ENCODE measurements at regions of chr13 and their contacts with region 1.

Region 1: GRCh38 chr13:28658796-28659620 is at the start of gene POMP:
- DNase-seq: peak; percentile 72 to 96
- H3K4me3 ChIP-seq: peak within 1 kb of the TSS; percentile 91 to 98
- H3K27ac ChIP-seq: peak within 1 kb of the TSS; percentile 92 to 97
- H3K4me1 ChIP-seq: peaks cover 9 to 30% of the 10 kb centered on the region in 2 donors
- H3K27me3 ChIP-seq: no peaks in the 10 kb centered on the region
- CTCF ChIP-seq: no peak
- total RNA-seq, gene POMP: 25.0 TPM

Region 2: DNA sequence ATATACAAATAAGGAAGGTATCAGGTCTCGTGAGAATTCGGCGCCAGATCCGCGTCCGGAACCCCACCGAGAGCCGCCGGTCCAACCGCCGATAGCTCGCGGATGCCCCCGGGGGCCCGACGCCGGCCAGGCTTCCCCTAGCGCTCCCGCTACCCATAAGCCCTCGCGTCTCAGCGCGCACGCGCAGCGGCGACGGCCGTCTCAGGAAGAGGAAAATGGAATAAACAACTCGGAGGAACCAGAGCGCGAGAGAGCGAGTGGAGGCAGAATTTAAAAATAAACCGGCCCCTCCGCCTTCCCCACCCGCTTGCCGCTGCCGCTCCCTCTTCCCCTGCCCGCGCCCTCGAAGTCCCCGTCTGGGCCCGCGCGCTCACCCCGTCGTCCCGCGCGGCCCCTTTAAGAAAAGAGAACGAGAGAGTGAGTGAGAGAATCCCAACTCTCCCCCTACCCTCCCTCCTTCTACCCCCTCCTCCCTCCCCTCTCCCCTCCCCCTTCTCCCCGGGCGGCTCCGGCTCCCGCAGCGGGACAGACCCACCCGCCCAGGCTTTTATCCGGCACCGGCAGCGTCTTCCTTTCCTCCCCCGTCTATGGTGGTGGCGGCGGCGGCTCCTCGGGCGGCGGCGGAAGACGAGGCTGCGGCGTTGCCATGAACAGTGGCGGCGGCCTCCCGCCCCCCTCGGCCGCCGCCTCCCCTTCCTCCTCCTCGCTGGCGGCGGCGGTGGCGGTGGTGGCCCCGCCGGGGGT is 520.8 kb before region 1 on chr13 and contains the start of gene PAN3:
- intact Hi-C with region 1: loop called (anchors 2 kb)
- DNase-seq: peak; percentile 72 to 96
- H3K4me3 ChIP-seq: peak within 1 kb of the TSS; percentile 81 to 95
- H3K27ac ChIP-seq: peak within 1 kb of the TSS; percentile 90 to 100
- H3K4me1 ChIP-seq: peaks cover 0 to 16% of the 10 kb centered on the region in 2 donors
- H3K27me3 ChIP-seq: no peaks in the 10 kb centered on the region
- CTCF ChIP-seq: peak in 1 of 3 experiments; percentile 10
- total RNA-seq, gene PAN3: 34.5 TPM

Region 3: DNA sequence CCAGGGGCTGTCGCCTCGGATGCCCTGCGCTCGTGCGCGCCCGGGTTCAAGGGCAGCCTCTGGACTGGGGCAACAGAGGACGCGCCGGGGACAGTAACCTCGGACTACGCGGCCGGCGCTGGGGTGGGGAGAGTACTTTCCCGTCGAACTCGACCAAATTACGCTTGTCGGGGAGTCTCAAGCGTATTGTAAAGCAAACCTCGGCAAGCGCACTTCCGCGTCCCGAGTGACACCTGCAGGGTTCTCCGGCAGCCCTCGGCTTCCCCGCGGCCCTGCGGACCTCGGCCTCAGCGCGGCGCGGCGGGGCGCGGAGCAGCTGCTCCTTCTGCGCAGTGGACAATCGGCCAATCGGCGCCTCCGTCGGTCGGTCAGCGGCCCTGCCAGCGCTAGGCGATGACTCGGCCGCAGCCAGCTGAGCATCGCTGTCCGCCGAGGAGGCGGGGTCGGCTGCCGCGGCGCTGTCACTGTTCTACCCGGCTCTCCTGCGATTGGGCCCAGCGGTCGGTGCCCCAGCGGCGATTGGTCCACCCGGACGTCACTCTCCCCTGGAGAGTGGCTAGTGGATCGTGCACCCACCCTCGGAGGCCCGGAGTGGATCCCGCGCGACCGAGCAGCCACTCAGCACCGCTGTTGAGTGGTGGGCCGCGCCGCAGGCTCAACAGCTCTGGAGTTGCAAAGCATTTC is 59.7 kb after region 1 on chr13 and contains the start of gene SLC46A3:
- intact Hi-C with region 1: loop called (anchors 1 kb)
- DNase-seq: peak; percentile 98 to 100
- H3K4me3 ChIP-seq: peak within 1 kb of the TSS; percentile 67 to 91
- H3K27ac ChIP-seq: peak within 1 kb of the TSS; percentile 96 to 97
- H3K4me1 ChIP-seq: peaks cover 0 to 6% of the 10 kb centered on the region in 2 donors
- H3K27me3 ChIP-seq: no peaks in the 10 kb centered on the region
- CTCF ChIP-seq: peak in 2 of 3 experiments; percentile 18 to 26
- total RNA-seq, gene SLC46A3: 2.8 TPM

Measured in ascending aorta (tissue), 2 donors.